ENCODE measurements at regions of chr10 and their contacts with region 1.

Region 1: GRCh38 chr10:103244663-103245271 is 920 bp upstream of the RPEL1 start:
- DNase-seq: no peak
- H3K4me3 ChIP-seq: no peak overlapping the region
- H3K27me3 ChIP-seq: no peaks in the 10 kb centered on the region
- CTCF ChIP-seq: peak; percentile 92

Region 2: GRCh38 chr10:102660888-102661657 is 583.7 kb before region 1 on chr10:
- CTCF ChIA-PET with region 1: no interaction called
- POLR2A ChIA-PET with region 1: no interaction called
- DNase-seq: peak; percentile 24
- H3K4me3 ChIP-seq: no peak overlapping the region
- H3K27me3 ChIP-seq: no peaks in the 10 kb centered on the region
- CTCF ChIP-seq: no peak

Region 3: GRCh38 chr10:102835007-102835482 is 409.7 kb before region 1 on chr10:
- CTCF ChIA-PET with region 1: interaction called, 10 read pairs
- POLR2A ChIA-PET with region 1: no interaction called
- DNase-seq: no peak
- H3K4me3 ChIP-seq: no peak overlapping the region
- H3K27me3 ChIP-seq: peaks cover 4% of the 10 kb centered on the region
- CTCF ChIP-seq: peak; percentile 86

Region 4: DNA sequence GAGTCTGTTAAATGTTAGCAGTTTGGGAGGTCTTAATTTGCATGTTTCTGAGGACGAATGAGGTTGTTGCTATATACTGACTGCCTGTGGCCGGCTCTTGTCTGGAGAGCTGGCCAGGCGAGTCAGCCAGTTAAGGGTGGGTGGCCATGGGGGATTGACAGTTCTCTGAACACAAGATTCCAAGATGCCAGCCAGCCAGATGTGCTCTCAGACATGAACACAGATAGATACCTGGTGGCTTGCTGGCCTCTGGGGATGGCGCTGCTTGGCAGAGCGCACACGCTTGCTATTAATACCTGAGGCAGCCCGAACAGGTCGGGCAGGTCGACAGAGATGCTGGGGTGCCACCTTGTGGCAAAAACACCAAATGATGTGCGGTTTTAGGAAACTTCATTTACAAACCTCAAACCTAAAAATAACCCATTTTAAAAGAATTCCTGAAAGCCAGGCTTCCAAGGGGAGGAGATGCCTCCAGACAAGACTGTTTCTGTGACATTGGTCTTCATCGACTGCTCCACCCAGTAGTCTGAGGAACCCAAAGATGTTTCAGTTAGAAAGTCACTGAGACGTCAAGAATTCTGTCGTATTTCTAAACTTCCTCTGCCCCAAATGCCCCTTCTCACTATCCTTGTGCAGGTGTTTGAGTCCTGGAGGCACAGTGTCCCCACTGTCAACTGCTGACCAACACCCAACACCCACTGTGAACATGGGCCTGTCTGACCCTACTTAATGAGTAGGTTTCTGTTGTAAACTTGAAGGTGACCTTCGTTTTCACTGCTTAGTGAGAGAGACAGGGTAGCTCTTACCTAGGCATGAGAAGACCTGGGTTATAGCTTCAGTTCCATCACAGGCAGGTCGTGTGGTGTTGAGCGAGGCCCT is 175.1 kb before region 1 on chr10:
- CTCF ChIA-PET with region 1: interaction called, 12 read pairs
- POLR2A ChIA-PET with region 1: no interaction called
- DNase-seq: no peak
- H3K4me3 ChIP-seq: no peak overlapping the region
- H3K27me3 ChIP-seq: no peaks in the 10 kb centered on the region
- CTCF ChIP-seq: peak; percentile 66

Region 5: GRCh38 chr10:103098240-103098639 is 146.5 kb before region 1 on chr10:
- CTCF ChIA-PET with region 1: interaction called, 11 read pairs
- POLR2A ChIA-PET with region 1: no interaction called
- DNase-seq: no peak
- H3K4me3 ChIP-seq: no peak overlapping the region
- H3K27me3 ChIP-seq: no peaks in the 10 kb centered on the region
- CTCF ChIP-seq: no peak

Region 6: DNA sequence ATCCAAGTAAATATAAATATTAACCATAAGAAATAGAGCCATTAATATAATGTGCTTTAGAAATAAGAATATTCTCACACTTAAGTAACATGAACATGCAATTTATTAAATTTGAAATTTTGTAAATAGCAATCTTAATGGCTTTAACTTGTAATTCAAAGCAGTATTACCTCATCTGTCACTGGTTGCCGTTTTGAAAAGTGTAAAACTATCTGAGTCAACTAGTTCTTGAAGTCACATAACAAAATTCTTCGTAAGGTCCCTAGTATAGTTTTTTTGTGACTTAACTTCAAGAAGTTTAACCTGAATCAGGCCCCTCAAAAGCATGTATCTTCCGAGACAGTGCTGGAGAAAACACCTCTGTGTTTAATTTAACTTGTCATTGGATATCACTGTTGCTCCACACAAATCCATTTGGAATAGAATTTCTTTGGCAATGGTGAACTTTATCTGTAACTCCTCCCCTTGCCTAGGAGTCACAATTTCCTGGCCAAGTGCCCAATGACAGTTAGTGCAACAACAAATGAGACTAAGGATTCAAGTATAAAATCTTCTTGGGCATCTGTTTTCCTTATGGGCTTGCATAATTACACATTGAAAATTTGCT is 98.8 kb before region 1 on chr10:
- CTCF ChIA-PET with region 1: interaction called, 16 read pairs
- POLR2A ChIA-PET with region 1: no interaction called
- DNase-seq: peak; percentile 83
- H3K4me3 ChIP-seq: no peak overlapping the region
- H3K27me3 ChIP-seq: no peaks in the 10 kb centered on the region
- CTCF ChIP-seq: no peak

Region 7: DNA sequence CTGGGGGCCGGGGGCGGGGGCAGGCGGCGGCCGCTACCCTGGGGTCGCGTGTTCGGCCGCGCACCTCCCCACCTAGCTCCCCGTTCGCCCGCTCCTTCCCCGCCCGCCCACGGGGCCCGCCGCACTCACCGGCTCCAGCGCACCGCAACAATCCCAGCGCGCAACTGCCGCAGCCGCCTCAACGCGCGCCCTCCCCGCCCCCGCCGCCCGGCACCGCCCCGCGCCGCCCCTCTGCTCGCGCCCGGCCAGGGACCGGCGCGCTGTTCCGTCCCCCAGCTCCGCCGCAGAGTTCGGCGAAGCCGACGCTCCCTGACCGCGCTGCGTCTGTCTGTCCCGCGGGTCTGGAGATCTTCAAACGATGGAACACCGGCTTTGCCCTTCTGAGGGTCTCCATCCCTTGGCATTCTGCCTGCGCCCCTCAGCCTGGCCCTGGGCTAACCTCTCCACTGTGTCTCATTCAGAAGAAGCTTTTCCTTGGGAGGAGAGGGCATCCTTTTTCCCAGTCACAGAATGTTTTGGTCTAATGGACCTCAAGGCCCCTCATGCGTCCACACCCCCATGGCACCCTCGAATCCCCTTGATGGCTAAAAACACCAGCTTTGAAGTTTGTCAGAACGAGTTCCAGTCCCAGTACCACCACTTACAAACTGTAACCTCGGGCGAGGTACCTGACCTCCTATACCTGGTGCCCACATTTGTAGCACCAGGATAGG is 51.5 kb before region 1 on chr10 and contains the start of gene NT5C2:
- CTCF ChIA-PET with region 1: interaction called, 10 read pairs
- POLR2A ChIA-PET with region 1: no interaction called
- DNase-seq: no peak
- H3K4me3 ChIP-seq: peak within 1 kb of the TSS; percentile 89
- H3K27me3 ChIP-seq: no peaks in the 10 kb centered on the region
- CTCF ChIP-seq: no peak
- polyA plus RNA-seq, gene NT5C2: 49.3 and 85.0 TPM in 2 replicates

Region 8: GRCh38 chr10:103231047-103231551 is 13.7 kb before region 1 on chr10:
- CTCF ChIA-PET with region 1: interaction called, 10 read pairs
- POLR2A ChIA-PET with region 1: no interaction called
- DNase-seq: peak; percentile 90
- H3K4me3 ChIP-seq: no peak overlapping the region
- H3K27me3 ChIP-seq: no peaks in the 10 kb centered on the region
- CTCF ChIP-seq: no peak

Region 9: DNA sequence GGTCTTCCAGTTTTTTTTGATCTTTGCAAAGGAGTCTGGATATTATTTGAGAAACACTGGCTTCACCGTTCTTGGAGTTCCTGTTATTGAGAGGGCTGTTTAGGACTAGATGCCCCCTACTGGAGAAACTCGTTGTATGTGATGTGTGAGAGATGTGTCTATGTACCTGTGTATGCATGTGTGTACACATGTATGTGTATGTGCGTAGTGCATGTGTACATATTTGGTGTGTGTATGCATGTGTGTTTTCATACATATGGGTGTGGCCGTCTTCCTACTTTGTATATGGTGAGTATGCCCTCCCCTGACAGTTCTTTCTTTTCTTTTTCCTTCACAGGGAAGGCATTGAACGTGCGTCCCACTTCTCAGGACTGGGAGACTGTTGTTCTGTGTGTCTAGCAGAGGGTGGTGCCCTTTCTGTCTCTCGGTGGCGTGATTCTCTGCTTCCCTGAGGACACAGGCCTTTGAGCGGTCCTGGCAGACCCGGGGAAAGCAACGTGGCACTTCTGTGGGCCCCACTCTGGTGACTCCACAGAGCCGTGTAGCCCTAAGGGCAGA is 237.3 kb after region 1 on chr10:
- CTCF ChIA-PET with region 1: no interaction called
- POLR2A ChIA-PET with region 1: no interaction called
- DNase-seq: no peak
- H3K4me3 ChIP-seq: no peak overlapping the region
- H3K27me3 ChIP-seq: no peaks in the 10 kb centered on the region
- CTCF ChIP-seq: peak; percentile 72